AG04450 (cell line): ENCODE measurements at regions of chr11 and their contacts with region 1.

Region 1: GRCh38 chr11:58567889-58568512 is 7.7 kb downstream of the LPXN start:
- DNase-seq: no peak
- H3K4me3 ChIP-seq: no peak overlapping the region
- H3K27ac ChIP-seq: no peak overlapping the region
- H3K27me3 ChIP-seq: no peaks in the 10 kb centered on the region
- CTCF ChIP-seq: peak; percentile 89

Region 2: GRCh38 chr11:58451585-58451984 is 116.4 kb before region 1 on chr11:
- CTCF ChIA-PET with region 1: no interaction called
- POLR2A ChIA-PET with region 1: no interaction called
- DNase-seq: no peak
- H3K4me3 ChIP-seq: no peak overlapping the region
- H3K27ac ChIP-seq: no peak overlapping the region
- H3K27me3 ChIP-seq: no peaks in the 10 kb centered on the region
- CTCF ChIP-seq: no peak

Region 3: DNA sequence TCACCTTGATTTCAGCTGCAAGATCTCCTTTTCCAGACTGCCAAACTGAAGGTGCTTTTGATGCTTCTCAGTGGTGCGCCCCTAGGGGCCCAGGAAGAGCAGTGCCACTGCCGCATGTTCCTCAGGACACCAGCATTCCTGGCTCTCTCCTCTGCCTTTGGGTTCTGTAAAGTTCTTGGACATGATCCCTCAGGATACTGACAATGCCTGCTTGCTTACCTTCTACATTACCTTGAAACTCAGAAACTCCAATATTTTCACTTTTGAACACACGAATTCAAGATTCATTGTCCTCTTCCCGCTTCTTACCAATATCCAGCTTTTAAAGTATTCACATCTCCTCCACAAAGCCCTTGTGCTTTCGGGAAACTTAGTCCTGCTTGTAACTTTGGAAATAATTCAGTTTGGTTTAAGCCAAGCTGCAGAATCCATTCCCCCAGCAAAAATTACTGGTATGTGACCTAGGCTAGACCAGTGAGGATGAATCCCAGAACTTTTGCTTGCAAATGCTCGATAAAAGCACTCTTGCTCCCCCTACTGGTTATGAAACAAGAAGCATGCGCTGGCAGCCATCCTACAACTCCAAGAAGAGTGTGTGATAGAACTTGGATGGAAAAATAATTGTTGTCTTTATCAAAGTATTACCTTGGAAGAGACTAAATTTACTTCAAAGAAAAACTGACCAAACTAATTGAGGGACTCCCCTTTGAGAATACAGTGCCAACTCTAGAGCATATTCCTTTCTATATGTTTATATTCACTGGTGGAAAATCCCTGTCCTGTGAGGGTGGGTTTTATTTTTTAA is 43.6 kb before region 1 on chr11:
- CTCF ChIA-PET with region 1: interaction called, 23 read pairs
- POLR2A ChIA-PET with region 1: no interaction called
- DNase-seq: peak; percentile 80
- H3K4me3 ChIP-seq: no peak overlapping the region
- H3K27ac ChIP-seq: no peak overlapping the region
- H3K27me3 ChIP-seq: no peaks in the 10 kb centered on the region
- CTCF ChIP-seq: peak; percentile 89

Region 4: GRCh38 chr11:58549644-58550043 is 18.4 kb before region 1 on chr11:
- CTCF ChIA-PET with region 1: interaction called, 46 read pairs
- POLR2A ChIA-PET with region 1: no interaction called
- DNase-seq: no peak
- H3K4me3 ChIP-seq: no peak overlapping the region
- H3K27ac ChIP-seq: no peak overlapping the region
- H3K27me3 ChIP-seq: no peaks in the 10 kb centered on the region
- CTCF ChIP-seq: no peak

Region 5: GRCh38 chr11:58654079-58654907 is 86.3 kb after region 1 on chr11:
- CTCF ChIA-PET with region 1: interaction called, 11 read pairs
- POLR2A ChIA-PET with region 1: no interaction called
- DNase-seq: peak; percentile 29
- H3K4me3 ChIP-seq: no peak overlapping the region
- H3K27ac ChIP-seq: no peak overlapping the region
- H3K27me3 ChIP-seq: no peaks in the 10 kb centered on the region
- CTCF ChIP-seq: peak; percentile 93

Region 6: GRCh38 chr11:58788355-58789023 is 220.5 kb after region 1 on chr11:
- CTCF ChIA-PET with region 1: interaction called, 13 read pairs
- POLR2A ChIA-PET with region 1: no interaction called
- DNase-seq: no peak
- H3K4me3 ChIP-seq: no peak overlapping the region
- H3K27ac ChIP-seq: no peak overlapping the region
- H3K27me3 ChIP-seq: no peaks in the 10 kb centered on the region
- CTCF ChIP-seq: peak; percentile 75

Region 7: DNA sequence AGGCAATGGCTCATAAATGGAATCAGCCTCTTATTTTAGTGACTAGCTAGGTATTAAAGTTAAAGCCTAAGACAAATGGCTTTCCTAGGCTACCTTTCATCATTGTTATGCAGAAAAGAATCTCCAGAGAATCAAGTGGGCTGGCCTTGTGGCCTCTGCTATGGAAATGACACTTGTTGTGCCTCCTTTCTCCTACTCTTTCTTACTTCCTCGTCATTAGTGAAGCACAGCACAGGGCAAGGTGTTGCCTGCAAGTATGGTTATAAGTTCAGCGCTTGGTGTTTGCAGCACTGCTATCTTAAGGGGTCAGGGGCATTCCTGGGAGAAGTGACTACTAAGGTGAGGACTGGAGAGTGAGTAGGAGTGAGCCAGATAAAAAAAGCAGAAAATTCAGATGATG is 325.9 kb after region 1 on chr11:
- CTCF ChIA-PET with region 1: no interaction called
- POLR2A ChIA-PET with region 1: no interaction called
- DNase-seq: no peak
- H3K4me3 ChIP-seq: no peak overlapping the region
- H3K27ac ChIP-seq: no peak overlapping the region
- H3K27me3 ChIP-seq: no peaks in the 10 kb centered on the region
- CTCF ChIP-seq: no peak